Mammary epithelial cell (primary cell): ENCODE measurements at regions of chr11 and their contacts with region 1.

Region 1: GRCh38 chr11:7688238-7688826 is 15.0 kb upstream of the CYB5R2 start:
- DNase-seq: peak; percentile 20
- H3K4me3 ChIP-seq: no peak overlapping the region
- H3K27ac ChIP-seq: no peak overlapping the region
- H3K4me1 ChIP-seq: peaks cover 9% of the 10 kb centered on the region
- H3K27me3 ChIP-seq: no peaks in the 10 kb centered on the region
- CTCF ChIP-seq: peak; percentile 78 to 83

Region 2: DNA sequence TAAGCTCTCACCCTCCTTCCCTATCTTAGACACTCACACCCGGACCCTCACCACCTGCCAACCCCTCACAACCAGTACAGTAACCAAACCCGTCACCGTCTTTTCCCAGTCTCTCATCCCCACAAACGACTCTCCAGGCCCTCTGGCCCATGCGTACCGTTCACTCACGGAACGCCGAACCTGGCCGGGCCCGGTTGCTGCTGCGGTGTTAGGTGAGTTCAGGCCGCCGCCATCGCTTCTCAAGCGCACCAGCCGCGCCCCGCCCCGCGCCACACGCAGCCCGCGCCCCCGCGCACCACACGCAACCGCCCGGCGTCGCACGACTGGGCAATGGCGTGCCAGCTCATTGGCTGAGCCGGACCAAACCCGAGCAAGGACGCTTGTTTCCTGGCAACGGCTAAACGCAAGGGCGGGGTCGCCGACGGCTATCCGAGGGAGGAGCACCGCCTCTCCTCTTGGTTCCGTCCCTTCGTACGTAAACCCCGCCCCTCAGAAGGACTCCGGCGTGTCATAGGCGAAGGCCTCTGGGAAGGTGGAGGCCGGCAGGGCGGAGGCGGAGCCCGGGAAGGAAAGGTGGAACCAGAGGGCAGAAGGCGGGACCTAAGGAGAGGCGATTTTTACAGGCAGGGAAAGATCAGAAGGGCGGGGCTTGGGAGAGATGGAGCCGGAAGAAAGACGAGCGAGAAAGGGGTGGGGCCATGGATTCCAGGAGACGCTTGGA is 1453.8 kb before region 1 on chr11 and contains the start of gene FHIP1B:
- CTCF ChIA-PET with region 1: no interaction called
- dilution Hi-C with region 1: no loop called
- in situ Hi-C with region 1: no loop called
- intact Hi-C with region 1: loop called (anchors 10 kb)
- DNase-seq: peak; percentile 100
- H3K4me3 ChIP-seq: peak within 1 kb of the TSS; percentile 86 to 98 (median 89)
- H3K27ac ChIP-seq: peak within 1 kb of the TSS; percentile 94
- H3K4me1 ChIP-seq: peaks cover 3% of the 10 kb centered on the region
- H3K27me3 ChIP-seq: no peaks in the 10 kb centered on the region
- CTCF ChIP-seq: no peak
- total RNA-seq, gene FHIP1B: 24.4 to 29.7 TPM

Region 3: DNA sequence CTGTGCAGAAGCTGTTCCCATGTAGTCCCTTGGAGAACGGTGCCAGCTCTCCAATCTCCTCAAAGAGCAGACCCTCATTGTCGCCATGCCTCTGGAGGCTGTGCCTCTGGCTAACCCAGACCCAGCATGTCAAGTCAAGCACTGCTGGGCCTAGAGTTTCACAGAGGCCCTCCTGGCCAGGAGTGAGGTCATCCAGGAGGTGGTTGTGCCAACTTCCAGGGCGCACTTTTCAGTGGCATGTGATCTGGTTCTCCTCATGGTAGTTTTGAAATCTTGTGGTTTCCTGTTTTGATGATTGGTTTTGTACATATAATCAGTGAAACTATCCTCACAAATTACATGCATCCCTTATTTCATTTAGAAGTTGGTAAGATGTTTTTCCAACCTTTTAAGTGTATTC is 95.6 kb before region 1 on chr11:
- CTCF ChIA-PET with region 1: no interaction called
- dilution Hi-C with region 1: loop called (anchors 5 kb)
- in situ Hi-C with region 1: no loop called
- intact Hi-C with region 1: no loop called
- DNase-seq: peak; percentile 95
- H3K4me3 ChIP-seq: no peak overlapping the region
- H3K27ac ChIP-seq: peak overlapping the region; percentile 71
- H3K4me1 ChIP-seq: peaks cover 73% of the 10 kb centered on the region
- H3K27me3 ChIP-seq: no peaks in the 10 kb centered on the region
- CTCF ChIP-seq: no peak

Region 4: GRCh38 chr11:7637447-7638157 is 50.7 kb before region 1 on chr11:
- CTCF ChIA-PET with region 1: no interaction called
- dilution Hi-C with region 1: no loop called
- in situ Hi-C with region 1: no loop called
- intact Hi-C with region 1: no loop called
- DNase-seq: peak; percentile 58
- H3K4me3 ChIP-seq: no peak overlapping the region
- H3K27ac ChIP-seq: no peak overlapping the region
- H3K4me1 ChIP-seq: peaks cover 10% of the 10 kb centered on the region
- H3K27me3 ChIP-seq: no peaks in the 10 kb centered on the region
- CTCF ChIP-seq: no peak

Region 5: GRCh38 chr11:7759010-7759409 is 70.7 kb after region 1 on chr11:
- CTCF ChIA-PET with region 1: no interaction called
- dilution Hi-C with region 1: no loop called
- in situ Hi-C with region 1: no loop called
- intact Hi-C with region 1: no loop called
- DNase-seq: peak; percentile 28
- H3K4me3 ChIP-seq: no peak overlapping the region
- H3K27ac ChIP-seq: no peak overlapping the region
- H3K4me1 ChIP-seq: peaks cover 4% of the 10 kb centered on the region
- H3K27me3 ChIP-seq: no peaks in the 10 kb centered on the region
- CTCF ChIP-seq: no peak

Region 6: GRCh38 chr11:7986768-7987559 is 298.6 kb after region 1 on chr11 and contains the start of gene EIF3F:
- CTCF ChIA-PET with region 1: no interaction called
- dilution Hi-C with region 1: no loop called
- in situ Hi-C with region 1: no loop called
- intact Hi-C with region 1: loop called (anchors 5 kb)
- DNase-seq: peak; percentile 98
- H3K4me3 ChIP-seq: peak within 1 kb of the TSS; percentile 68 to 98 (median 79)
- H3K27ac ChIP-seq: peak within 1 kb of the TSS; percentile 84
- H3K4me1 ChIP-seq: peaks cover 31% of the 10 kb centered on the region
- H3K27me3 ChIP-seq: no peaks in the 10 kb centered on the region
- CTCF ChIP-seq: peak; percentile 84 to 86
- total RNA-seq, gene EIF3F: 234 to 399 TPM